Naive thymus-derived CD4-positive, alpha-beta T cell (primary cell): ENCODE measurements at regions of chr14 and their contacts with region 1.

Region 1: DNA sequence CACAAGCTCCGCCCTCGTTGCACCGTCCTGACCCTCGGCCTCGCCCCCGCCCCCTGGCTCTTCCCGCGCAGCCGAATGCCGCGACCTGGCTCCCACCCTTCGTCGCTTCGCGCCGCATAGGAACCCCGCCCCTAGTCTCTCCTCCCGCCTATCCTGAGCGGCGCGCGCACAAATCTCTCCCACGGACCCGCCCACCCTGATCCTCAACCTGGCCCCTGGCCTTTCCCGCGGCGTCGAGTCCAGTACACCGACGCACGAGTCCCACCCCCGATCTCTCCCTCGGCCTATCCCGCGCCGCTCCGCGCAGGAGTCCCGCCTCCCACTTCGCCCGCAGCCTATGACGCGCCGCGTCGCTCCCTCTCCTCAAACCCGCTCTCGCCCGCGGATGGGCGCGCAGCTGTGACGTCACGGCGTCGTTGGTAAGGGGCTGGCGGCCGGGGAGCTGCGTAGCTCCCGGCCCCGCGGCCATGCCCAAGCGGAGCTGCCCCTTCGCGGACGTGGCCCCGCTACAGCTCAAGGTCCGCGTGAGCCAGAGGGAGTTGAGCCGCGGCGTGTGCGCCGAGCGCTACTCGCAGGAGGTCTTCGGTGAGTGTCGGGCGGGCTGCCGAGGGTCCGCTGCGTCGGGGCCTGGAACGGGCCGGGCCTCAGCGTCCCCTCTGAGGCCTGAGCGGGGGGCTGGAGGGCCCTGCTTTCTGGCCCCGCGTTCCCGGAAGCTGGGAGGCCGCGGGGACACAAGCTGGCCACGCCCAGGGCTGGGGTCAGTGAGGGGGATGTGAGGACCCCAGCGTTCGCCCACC is at the start of gene SIVA1:
- DNase-seq: peak; percentile 98 to 100 (median 99)
- ATAC-seq: peak; percentile 94
- H3K4me3 ChIP-seq: peak within 1 kb of the TSS; percentile 95
- H3K4me3 Mint-ChIP-seq: peak within 1 kb of the TSS; percentile 88 to 97 (median 92)
- H3K27ac ChIP-seq: peak within 1 kb of the TSS; percentile 95
- H3K27ac Mint-ChIP-seq: peak within 1 kb of the TSS; percentile 78 to 94 (median 92)
- H3K4me1 ChIP-seq: peaks cover 14 to 29% of the 10 kb centered on the region in 2 donors
- H3K4me1 Mint-ChIP-seq: peaks cover 19 to 45% (median 36%) of the 10 kb centered on the region in 7 donors
- H3K27me3 ChIP-seq: no peaks in the 10 kb centered on the region
- H3K27me3 Mint-ChIP-seq: no peaks in the 10 kb centered on the region
- total RNA-seq, gene SIVA1: 61.4 to 97.7 (median 77.4) TPM

Region 2: GRCh38 chr14:104677512-104678332 is 75.2 kb before region 1 on chr14:
- CTCF ChIA-PET with region 1: no interaction called
- POLR2A ChIA-PET with region 1: interaction called, 3 read pairs
- intact Hi-C with region 1: loop called (anchors 2 to 5 kb)
- DNase-seq: peak; percentile 38 to 86 (median 51)
- ATAC-seq: peak; percentile 78
- H3K4me3 ChIP-seq: peak overlapping the region; percentile 72
- H3K4me3 Mint-ChIP-seq: peak overlapping the region; percentile 68 to 86 (median 82)
- H3K27ac ChIP-seq: peak overlapping the region; percentile 40
- H3K27ac Mint-ChIP-seq: peak overlapping the region in 6 of 9 donors; percentile 21 to 87 (median 54)
- H3K4me1 ChIP-seq: peaks cover 6 to 7% of the 10 kb centered on the region in 2 donors
- H3K4me1 Mint-ChIP-seq: peaks cover 0 to 40% (median 5%) of the 10 kb centered on the region in 7 donors
- H3K27me3 ChIP-seq: no peaks in the 10 kb centered on the region
- H3K27me3 Mint-ChIP-seq: peaks cover 0 to 10% (median 0%) of the 10 kb centered on the region in 5 donors

Region 3: DNA sequence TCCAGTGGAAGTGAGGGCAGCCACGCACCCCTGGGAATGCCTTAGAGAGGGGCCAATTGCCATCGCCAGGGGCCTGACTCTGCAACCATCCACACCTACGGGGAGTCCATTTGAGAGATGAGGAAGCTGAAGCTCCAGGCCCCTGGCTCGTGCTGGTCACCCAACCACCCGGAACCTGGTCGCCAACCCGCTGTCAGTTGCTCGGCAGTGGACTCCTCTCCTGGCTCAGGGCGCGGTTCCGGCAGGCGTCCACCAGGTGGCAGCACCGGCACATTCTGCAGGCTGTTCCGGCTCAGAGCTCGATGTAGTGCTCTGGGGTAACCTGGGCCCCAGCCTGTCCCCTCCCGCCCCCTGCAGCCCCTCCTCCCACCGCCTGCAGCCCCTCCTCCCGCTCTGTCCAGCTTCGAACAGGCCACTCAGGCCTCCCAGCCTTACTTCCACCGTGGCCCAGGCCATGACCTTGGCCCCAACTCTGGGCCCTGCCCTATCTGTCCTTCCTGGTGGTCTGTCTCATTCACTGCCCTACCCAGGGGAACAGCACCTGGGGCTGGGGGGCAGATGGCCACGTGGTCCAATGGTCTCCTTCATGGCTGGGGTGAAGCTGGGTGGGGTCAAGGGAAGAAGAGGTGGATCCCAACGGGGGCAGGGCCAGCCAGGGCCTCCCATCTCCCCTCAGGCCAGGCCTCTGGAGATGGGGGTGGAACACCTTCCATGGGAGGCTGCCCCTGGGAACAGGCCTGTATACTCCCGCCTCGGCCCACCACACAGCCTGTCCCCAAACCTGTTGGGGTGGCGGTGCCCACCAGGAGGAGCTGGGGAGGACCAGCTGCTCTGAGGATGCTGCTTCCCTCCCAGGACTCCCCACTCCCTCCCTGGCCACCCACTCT is 15.7 kb after region 1 on chr14:
- CTCF ChIA-PET with region 1: interaction called, 9 read pairs
- POLR2A ChIA-PET with region 1: interaction called, 5 read pairs
- intact Hi-C with region 1: loop called (anchors 1 kb)
- DNase-seq: peak; percentile 78 to 96 (median 87)
- ATAC-seq: peak; percentile 96
- H3K4me3 ChIP-seq: no peak overlapping the region
- H3K4me3 Mint-ChIP-seq: peak overlapping the region in 1 of 10 donors; percentile 37
- H3K27ac ChIP-seq: no peak overlapping the region
- H3K27ac Mint-ChIP-seq: no peak overlapping the region
- H3K4me1 ChIP-seq: no peaks in the 10 kb centered on the region
- H3K4me1 Mint-ChIP-seq: peaks cover 0 to 10% (median 2%) of the 10 kb centered on the region in 7 donors
- H3K27me3 ChIP-seq: no peaks in the 10 kb centered on the region
- H3K27me3 Mint-ChIP-seq: no peaks in the 10 kb centered on the region

Region 4: GRCh38 chr14:104876251-104876699 is 123.3 kb after region 1 on chr14:
- CTCF ChIA-PET with region 1: no interaction called
- POLR2A ChIA-PET with region 1: no interaction called
- intact Hi-C with region 1: loop called in 1 of 2 experiments (anchors 5 kb)
- DNase-seq: peak in 3 of 9 donors; percentile 14 to 56 (median 32)
- ATAC-seq: peak; percentile 87
- H3K4me3 ChIP-seq: no peak overlapping the region
- H3K4me3 Mint-ChIP-seq: no peak overlapping the region
- H3K27ac ChIP-seq: no peak overlapping the region
- H3K27ac Mint-ChIP-seq: no peak overlapping the region
- H3K4me1 ChIP-seq: no peaks in the 10 kb centered on the region
- H3K4me1 Mint-ChIP-seq: peaks cover 0 to 8% (median 4%) of the 10 kb centered on the region in 7 donors
- H3K27me3 ChIP-seq: no peaks in the 10 kb centered on the region
- H3K27me3 Mint-ChIP-seq: no peaks in the 10 kb centered on the region

Region 5: DNA sequence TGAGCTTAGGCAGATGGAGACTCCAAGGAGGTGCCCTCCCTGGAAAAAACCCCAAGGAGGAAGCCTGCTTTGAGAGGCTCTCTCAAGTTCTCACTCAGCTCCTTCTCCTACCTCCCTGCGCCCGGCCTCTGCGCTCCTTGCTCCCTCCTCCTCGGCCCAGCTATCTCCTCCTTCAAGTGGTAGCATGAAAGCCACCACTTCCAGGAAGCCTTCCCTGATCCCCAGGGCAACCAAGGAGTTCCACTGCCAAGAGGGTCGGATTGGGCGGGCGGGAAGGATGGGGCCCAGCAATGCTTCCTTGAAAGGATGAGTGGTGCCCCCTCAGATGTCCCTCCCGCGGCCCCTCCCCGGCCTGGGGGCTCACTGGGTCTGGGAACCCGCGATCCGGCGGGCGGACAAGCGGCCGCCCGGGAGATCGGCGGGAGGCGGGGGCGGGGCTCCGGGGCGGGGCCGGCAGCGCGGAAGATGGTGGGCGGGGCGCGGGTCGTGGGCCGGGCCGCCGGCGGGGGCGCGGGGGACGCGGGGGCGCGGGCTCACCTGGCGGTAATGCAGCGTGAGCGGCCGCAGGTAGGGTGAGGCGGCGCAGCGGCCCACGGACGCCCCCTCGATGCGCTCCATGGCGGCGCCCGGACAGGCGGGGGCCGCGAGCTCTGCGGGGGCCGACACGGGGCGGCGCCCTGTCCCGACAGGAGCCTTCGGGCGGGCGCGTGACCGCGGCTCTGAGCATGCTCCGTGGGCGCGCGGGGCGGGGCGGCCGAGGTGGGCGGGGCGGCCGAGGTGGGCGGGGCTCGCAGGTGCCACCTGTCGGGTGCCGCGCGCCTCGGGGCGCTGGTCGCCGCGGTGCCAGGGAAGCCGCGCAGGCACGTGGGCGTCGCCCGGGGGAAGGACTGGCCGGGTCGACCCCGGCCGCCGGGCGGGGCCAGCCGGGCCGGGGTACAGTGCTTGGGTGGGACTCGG is 427.9 kb after region 1 on chr14 and contains the start of gene NUDT14:
- CTCF ChIA-PET with region 1: no interaction called
- POLR2A ChIA-PET with region 1: no interaction called
- intact Hi-C with region 1: loop called (anchors 2 to 5 kb)
- DNase-seq: peak; percentile 69 to 88 (median 82)
- ATAC-seq: peak; percentile 94
- H3K4me3 ChIP-seq: peak within 1 kb of the TSS; percentile 52
- H3K4me3 Mint-ChIP-seq: peak within 1 kb of the TSS; percentile 68 to 86 (median 77)
- H3K27ac ChIP-seq: peak within 1 kb of the TSS; percentile 53
- H3K27ac Mint-ChIP-seq: peak within 1 kb of the TSS in 7 of 9 donors; percentile 10 to 76 (median 64)
- H3K4me1 ChIP-seq: peaks cover 4 to 12% of the 10 kb centered on the region in 2 donors
- H3K4me1 Mint-ChIP-seq: peaks cover 0 to 23% (median 15%) of the 10 kb centered on the region in 7 donors
- H3K27me3 ChIP-seq: no peaks in the 10 kb centered on the region
- H3K27me3 Mint-ChIP-seq: peaks cover 0 to 4% (median 0%) of the 10 kb centered on the region in 5 donors
- total RNA-seq, gene NUDT14: 17.3 to 29.6 (median 20.6) TPM

Region 6: GRCh38 chr14:105627711-105628110 is 874.8 kb after region 1 on chr14:
- CTCF ChIA-PET with region 1: no interaction called
- POLR2A ChIA-PET with region 1: no interaction called
- intact Hi-C with region 1: no loop called
- DNase-seq: no peak
- ATAC-seq: no peak
- H3K4me3 ChIP-seq: no peak overlapping the region
- H3K4me3 Mint-ChIP-seq: no peak overlapping the region
- H3K27ac ChIP-seq: no peak overlapping the region
- H3K27ac Mint-ChIP-seq: no peak overlapping the region
- H3K4me1 ChIP-seq: no peaks in the 10 kb centered on the region
- H3K4me1 Mint-ChIP-seq: peaks cover 0 to 4% (median 0%) of the 10 kb centered on the region in 7 donors
- H3K27me3 ChIP-seq: no peaks in the 10 kb centered on the region
- H3K27me3 Mint-ChIP-seq: peaks cover 0 to 10% (median 0%) of the 10 kb centered on the region in 5 donors